ENCODE measurements at regions of chr11 and their contacts with region 1.

Region 1: DNA sequence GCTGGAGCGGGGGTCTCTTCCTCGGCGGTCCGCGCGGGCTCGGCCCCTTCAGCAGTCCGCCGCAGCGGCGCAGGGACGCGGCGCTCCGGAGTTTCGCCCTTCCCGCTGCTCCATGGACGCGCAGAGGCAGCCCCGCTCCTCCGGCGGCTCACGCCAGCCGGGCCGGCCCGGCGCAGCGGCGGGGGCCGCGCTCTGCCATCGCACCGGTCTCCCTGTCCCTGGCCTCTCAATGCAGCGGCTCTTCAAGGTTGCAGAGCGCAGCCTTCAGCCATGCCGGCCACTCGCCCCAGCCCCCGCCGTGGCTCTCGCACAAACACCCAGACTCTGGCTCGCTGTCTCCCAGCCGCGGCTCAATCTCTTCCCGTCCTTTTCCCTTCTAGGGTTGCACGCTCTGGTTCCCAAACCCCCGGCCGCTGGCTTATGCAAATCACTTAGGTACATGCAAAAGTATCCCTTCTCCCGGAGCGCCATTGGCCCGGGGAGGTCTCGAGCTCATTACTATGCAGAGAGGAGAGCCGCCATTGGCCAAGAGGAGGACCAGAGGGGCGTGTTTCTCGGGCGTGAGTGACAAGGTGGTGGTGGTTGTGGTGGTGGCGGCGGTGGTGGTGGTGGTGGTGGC is at the start of gene LGR4:
- DNase-seq: peak; percentile 93 to 99 (median 98)
- H3K4me3 ChIP-seq: peak within 1 kb of the TSS; percentile 54 to 93 (median 66)
- H3K27ac ChIP-seq: peak within 1 kb of the TSS; percentile 77 to 95 (median 88)
- H3K4me1 ChIP-seq: peaks cover 21 to 42% of the 10 kb centered on the region in 2 donors
- H3K27me3 ChIP-seq: no peaks in the 10 kb centered on the region
- CTCF ChIP-seq: no peak
- POLR2A ChIP-seq: peak; percentile 60 to 98
- total RNA-seq, gene LGR4: 17.3 to 90.4 (median 48.7) TPM

Region 2: DNA sequence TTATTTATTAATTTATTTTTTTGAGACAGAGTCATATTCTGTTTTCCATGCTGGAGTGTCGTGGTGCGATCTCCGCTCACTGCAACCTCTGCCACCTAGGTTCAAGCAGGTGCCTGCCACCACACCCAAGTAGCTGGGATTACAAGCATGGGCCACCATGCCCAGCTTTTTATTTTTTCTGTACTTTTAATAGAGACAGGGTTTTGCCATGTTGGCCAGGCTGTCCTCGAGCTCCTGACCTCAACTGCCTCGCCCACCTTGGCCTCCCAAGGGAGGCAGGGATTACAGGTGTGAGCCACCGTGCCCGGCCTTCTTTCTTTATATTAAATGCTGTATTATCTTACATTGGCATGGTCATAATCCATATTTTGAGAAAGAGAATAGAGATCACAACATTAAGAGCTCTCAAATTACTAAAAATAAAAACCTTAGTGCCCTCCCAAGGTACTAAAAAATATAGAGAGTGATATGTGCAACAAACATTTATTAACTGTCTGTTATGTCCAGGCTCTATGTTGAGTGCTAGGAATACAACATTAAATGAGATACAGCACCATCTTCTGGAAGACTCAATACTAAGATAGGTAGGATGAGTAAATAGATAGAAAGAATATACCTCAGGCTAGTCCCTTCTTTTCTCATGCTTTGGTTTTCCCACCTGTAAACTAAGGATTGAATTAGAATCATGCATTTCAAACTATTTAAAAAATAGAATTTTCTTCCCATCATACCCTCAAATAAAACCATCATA is 347.8 kb before region 1 on chr11:
- intact Hi-C with region 1: no loop called
- DNase-seq: no peak
- H3K4me3 ChIP-seq: no peak overlapping the region
- H3K27ac ChIP-seq: no peak overlapping the region
- H3K4me1 ChIP-seq: no peaks in the 10 kb centered on the region
- H3K27me3 ChIP-seq: no peaks in the 10 kb centered on the region
- CTCF ChIP-seq: peak in 2 of 6 experiments; percentile 16 to 30
- POLR2A ChIP-seq: no peak

Region 3: DNA sequence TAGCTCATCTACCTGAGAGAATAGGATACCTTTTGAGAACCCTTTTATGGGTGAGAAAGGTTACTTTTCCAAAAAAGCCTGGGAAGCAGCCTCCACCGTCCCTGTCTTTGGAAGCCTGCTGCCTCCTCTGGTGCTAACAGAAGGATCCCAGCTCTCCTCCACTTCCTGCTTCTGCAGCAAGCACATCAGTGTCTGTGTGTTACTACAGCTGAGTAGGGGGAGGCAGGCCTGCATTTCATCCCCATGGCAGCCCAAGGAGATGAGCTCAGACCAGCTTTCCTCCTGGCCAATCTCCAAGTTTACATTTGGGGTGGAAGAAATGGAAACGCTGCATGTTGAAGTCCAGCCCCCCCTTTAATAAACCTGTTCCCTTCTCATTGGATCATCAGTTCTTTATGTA is 102.1 kb before region 1 on chr11:
- intact Hi-C with region 1: loop called in 1 of 2 experiments (anchors 10 kb)
- DNase-seq: no peak
- H3K4me3 ChIP-seq: no peak overlapping the region
- H3K27ac ChIP-seq: no peak overlapping the region
- H3K4me1 ChIP-seq: no peaks in the 10 kb centered on the region
- H3K27me3 ChIP-seq: no peaks in the 10 kb centered on the region
- CTCF ChIP-seq: no peak
- POLR2A ChIP-seq: no peak

Region 4: GRCh38 chr11:27392278-27393114 is 80.0 kb before region 1 on chr11:
- intact Hi-C with region 1: loop called in 1 of 2 experiments (anchors 10 kb)
- DNase-seq: peak in 3 of 7 donors; percentile 38 to 53 (median 50)
- H3K4me3 ChIP-seq: no peak overlapping the region
- H3K27ac ChIP-seq: peak overlapping the region; percentile 51 to 75 (median 58)
- H3K4me1 ChIP-seq: peaks cover 38 to 60% of the 10 kb centered on the region in 2 donors
- H3K27me3 ChIP-seq: no peaks in the 10 kb centered on the region
- CTCF ChIP-seq: no peak
- POLR2A ChIP-seq: peak in 1 of 2 donors; percentile 22

Region 5: GRCh38 chr11:27406498-27407354 is 65.8 kb before region 1 on chr11:
- intact Hi-C with region 1: no loop called
- DNase-seq: no peak
- H3K4me3 ChIP-seq: no peak overlapping the region
- H3K27ac ChIP-seq: peak overlapping the region in 1 of 5 donors; percentile 8
- H3K4me1 ChIP-seq: peaks cover 16 to 24% of the 10 kb centered on the region in 2 donors
- H3K27me3 ChIP-seq: no peaks in the 10 kb centered on the region
- CTCF ChIP-seq: no peak
- POLR2A ChIP-seq: no peak

Measured in adrenal gland (tissue), 19 donors.